CD8-positive, alpha-beta T cell (primary cell): ENCODE measurements at regions of chr5 and their contacts with region 1.

Region 1: GRCh38 chr5:40089269-40089668 is 590.4 kb upstream of the PTGER4 start:
- DNase-seq: no peak
- ATAC-seq: no peak
- H3K4me3 ChIP-seq: no peak overlapping the region
- H3K4me3 Mint-ChIP-seq: no peak overlapping the region
- H3K27ac ChIP-seq: no peak overlapping the region
- H3K27ac Mint-ChIP-seq: no peak overlapping the region
- H3K4me1 ChIP-seq: no peaks in the 10 kb centered on the region
- H3K4me1 Mint-ChIP-seq: no peaks in the 10 kb centered on the region
- H3K27me3 ChIP-seq: no peaks in the 10 kb centered on the region
- H3K27me3 Mint-ChIP-seq: no peaks in the 10 kb centered on the region
- CTCF ChIP-seq: no peak

Region 2: DNA sequence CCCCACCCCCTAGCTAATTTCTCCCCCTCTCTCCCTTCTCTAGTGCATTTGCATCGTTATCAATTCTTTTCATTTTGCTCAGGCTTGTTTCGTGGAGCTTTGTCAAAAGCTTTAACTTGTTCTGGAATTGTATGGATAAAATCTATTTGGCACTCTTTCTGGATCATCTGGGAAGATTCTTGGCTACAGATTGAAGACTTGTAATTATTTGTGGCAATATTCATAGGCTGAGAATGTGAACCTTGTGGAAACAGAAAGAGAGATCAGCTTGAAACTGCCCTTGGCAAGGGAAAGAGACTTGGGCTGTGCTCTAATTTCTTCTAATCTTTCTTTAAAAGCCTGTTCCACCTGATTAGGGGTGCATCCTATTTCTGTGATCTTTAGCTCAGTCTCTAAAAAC is 323.9 kb before region 1 on chr5:
- CTCF ChIA-PET with region 1: no interaction called
- POLR2A ChIA-PET with region 1: no interaction called
- intact Hi-C with region 1: no loop called
- DNase-seq: no peak
- ATAC-seq: no peak
- H3K4me3 ChIP-seq: no peak overlapping the region
- H3K4me3 Mint-ChIP-seq: no peak overlapping the region
- H3K27ac ChIP-seq: no peak overlapping the region
- H3K27ac Mint-ChIP-seq: no peak overlapping the region
- H3K4me1 ChIP-seq: no peaks in the 10 kb centered on the region
- H3K4me1 Mint-ChIP-seq: no peaks in the 10 kb centered on the region
- H3K27me3 ChIP-seq: peaks cover 0 to 2% of the 10 kb centered on the region in 2 experiments
- H3K27me3 Mint-ChIP-seq: peaks cover 17% of the 10 kb centered on the region
- CTCF ChIP-seq: no peak

Region 3: GRCh38 chr5:40134883-40135520 is 45.7 kb after region 1 on chr5:
- CTCF ChIA-PET with region 1: no interaction called
- POLR2A ChIA-PET with region 1: no interaction called
- intact Hi-C with region 1: loop called in 1 of 2 experiments (anchors 1 kb)
- DNase-seq: no peak
- ATAC-seq: no peak
- H3K4me3 ChIP-seq: no peak overlapping the region
- H3K4me3 Mint-ChIP-seq: no peak overlapping the region
- H3K27ac ChIP-seq: no peak overlapping the region
- H3K27ac Mint-ChIP-seq: no peak overlapping the region
- H3K4me1 ChIP-seq: no peaks in the 10 kb centered on the region
- H3K4me1 Mint-ChIP-seq: no peaks in the 10 kb centered on the region
- H3K27me3 ChIP-seq: no peaks in the 10 kb centered on the region
- H3K27me3 Mint-ChIP-seq: no peaks in the 10 kb centered on the region
- CTCF ChIP-seq: no peak